Panc1 (cell line): ENCODE measurements at regions of chr2 and their contacts with region 1.

Region 1: DNA sequence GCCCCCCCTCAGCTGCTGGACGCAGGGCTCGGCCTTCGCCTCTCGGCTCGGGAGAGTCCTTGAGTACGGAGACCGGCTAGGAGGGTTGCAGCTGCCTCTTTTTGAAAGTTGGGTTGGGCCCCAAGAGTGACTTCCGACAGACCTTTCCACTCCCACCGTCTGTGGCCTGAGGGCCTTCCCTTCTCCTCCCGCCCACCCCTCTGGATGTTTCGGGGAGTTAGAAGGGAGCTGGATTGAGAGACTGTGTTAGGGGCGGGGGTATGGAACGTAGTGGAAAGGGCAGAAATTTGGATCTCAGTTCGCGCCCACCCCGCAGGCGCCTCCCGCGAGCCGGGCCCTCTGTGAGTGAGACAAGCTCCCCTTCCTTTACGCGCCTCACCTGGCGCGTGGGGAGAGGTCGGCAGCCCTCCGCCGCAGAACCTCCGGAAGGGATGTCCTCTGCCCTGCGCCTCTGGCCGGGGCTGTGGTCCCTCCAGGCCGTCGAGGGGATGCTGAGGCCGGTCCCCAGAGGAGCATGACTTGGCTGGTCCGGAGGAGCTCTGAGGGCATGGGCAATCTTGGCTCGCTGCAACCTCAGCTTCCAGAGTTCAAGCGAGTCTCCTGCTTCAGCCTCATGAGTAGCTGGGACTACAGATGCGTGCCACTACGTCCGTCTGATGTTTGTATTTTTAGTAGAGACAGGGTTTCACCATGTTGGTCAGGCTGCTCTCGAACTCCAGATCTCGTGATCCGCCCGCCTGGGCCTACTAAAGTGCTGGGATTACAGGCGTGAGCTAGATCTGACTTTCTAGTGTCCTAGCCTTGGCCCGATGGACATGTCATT is 15.9 kb downstream of the C2orf74 start:
- DNase-seq: no peak
- ATAC-seq: no peak; the same call in 1 of the 2 replicates
- H3K4me3 ChIP-seq: peak overlapping the region; percentile 67 to 77
- H3K27ac ChIP-seq: peak overlapping the region; percentile 94
- H3K4me1 ChIP-seq: peaks cover 31% of the 10 kb centered on the region
- H3K27me3 ChIP-seq: no peaks in the 10 kb centered on the region
- CTCF ChIP-seq: no peak

Region 2: GRCh38 chr2:61247204-61247812 is 69.4 kb after region 1 on chr2:
- CTCF ChIA-PET with region 1: no interaction called
- POLR2A ChIA-PET with region 1: interaction called, 12 read pairs
- in situ Hi-C with region 1: no loop called
- intact Hi-C with region 1: no loop called
- DNase-seq: no peak
- ATAC-seq: peak; percentile 34; the same call in 1 of the 2 replicates
- H3K4me3 ChIP-seq: no peak overlapping the region
- H3K27ac ChIP-seq: no peak overlapping the region
- H3K4me1 ChIP-seq: no peaks in the 10 kb centered on the region
- H3K27me3 ChIP-seq: no peaks in the 10 kb centered on the region
- CTCF ChIP-seq: no peak

Region 3: DNA sequence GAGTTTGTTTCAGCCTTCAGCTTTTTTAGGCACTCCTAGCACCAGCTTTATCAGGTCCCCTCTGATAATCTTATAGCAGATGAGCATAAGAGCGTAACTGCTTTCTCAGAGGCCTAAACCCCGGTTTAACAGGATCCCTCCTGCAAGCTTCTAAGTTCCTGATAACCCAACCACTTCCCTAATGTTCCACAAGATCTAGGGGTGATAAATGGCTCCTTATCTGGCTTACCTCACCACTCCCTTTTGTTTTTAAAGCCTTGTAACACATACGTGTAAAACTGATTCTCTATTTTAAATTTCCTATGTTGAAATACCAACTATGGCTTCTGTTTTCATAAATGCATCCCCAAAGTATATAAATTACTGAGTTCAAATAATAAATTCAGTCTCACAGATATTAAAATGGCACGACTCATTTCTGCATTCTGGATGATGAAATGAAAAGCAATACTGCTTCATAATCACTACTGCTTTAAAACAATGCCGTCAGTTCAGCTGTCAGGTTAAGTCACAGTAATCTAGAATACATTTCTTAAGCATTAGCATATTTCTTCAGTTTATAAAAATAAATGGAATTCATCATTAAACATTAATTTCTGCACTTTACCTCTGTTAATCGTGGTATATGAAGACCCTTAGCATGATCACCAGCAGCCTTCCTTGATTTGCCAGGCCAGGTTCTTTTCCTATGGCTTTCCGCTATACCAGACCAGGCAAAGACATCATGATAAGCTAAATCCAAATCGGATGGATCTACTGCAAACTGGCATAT is 110.3 kb after region 1 on chr2:
- CTCF ChIA-PET with region 1: no interaction called
- POLR2A ChIA-PET with region 1: interaction called, 11 read pairs
- in situ Hi-C with region 1: no loop called
- intact Hi-C with region 1: no loop called
- DNase-seq: no peak
- ATAC-seq: no peak
- H3K4me3 ChIP-seq: no peak overlapping the region
- H3K27ac ChIP-seq: peak overlapping the region; percentile 45; the same call in 1 of the 2 replicates
- H3K4me1 ChIP-seq: no peaks in the 10 kb centered on the region; the same call in 1 of the 2 replicates
- H3K27me3 ChIP-seq: no peaks in the 10 kb centered on the region
- CTCF ChIP-seq: no peak